RWPE1 (cell line): ENCODE measurements at regions of chr17 and their contacts with region 1.

Region 1: GRCh38 chr17:45172454-45173286 is 11.0 kb downstream of the HEXIM2 start:
- DNase-seq: peak; percentile 89
- H3K27ac ChIP-seq: peak overlapping the region; percentile 100
- CTCF ChIP-seq: no peak

Region 2: DNA sequence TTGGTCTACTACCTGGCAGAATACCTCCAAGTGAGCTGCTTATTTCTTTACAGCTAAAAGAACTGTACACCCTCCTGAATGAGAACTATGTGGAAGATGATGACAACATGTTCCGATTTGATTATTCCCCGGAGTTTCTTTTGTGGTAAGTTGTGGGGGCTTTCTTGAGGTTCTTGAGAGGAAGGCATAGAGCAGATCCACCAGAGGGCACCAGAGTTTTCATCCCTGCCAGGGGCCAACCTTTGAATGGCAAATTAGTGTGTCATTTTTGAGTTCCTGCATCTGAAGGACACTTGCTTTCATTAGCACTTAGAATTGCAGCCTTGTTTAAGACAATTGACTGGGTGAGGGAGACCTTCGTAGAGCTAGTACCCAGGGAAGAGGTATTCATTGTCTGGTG is 76.5 kb before region 1 on chr17:
- CTCF ChIA-PET with region 1: no interaction called
- POLR2A ChIA-PET with region 1: no interaction called
- DNase-seq: no peak
- H3K27ac ChIP-seq: no peak overlapping the region
- CTCF ChIP-seq: peak; percentile 54

Region 3: GRCh38 chr17:45161019-45161825 is 11.4 kb before region 1 on chr17:
- CTCF ChIA-PET with region 1: interaction called, 8 read pairs
- POLR2A ChIA-PET with region 1: interaction called, 40 read pairs
- DNase-seq: peak; percentile 97
- H3K27ac ChIP-seq: peak overlapping the region; percentile 95
- CTCF ChIP-seq: no peak

Region 4: GRCh38 chr17:45197555-45198334 is 25.1 kb after region 1 on chr17:
- CTCF ChIA-PET with region 1: interaction called, 27 read pairs
- POLR2A ChIA-PET with region 1: interaction called, 4 read pairs
- DNase-seq: peak; percentile 86
- H3K27ac ChIP-seq: peak overlapping the region; percentile 69
- CTCF ChIP-seq: peak; percentile 99

Region 5: DNA sequence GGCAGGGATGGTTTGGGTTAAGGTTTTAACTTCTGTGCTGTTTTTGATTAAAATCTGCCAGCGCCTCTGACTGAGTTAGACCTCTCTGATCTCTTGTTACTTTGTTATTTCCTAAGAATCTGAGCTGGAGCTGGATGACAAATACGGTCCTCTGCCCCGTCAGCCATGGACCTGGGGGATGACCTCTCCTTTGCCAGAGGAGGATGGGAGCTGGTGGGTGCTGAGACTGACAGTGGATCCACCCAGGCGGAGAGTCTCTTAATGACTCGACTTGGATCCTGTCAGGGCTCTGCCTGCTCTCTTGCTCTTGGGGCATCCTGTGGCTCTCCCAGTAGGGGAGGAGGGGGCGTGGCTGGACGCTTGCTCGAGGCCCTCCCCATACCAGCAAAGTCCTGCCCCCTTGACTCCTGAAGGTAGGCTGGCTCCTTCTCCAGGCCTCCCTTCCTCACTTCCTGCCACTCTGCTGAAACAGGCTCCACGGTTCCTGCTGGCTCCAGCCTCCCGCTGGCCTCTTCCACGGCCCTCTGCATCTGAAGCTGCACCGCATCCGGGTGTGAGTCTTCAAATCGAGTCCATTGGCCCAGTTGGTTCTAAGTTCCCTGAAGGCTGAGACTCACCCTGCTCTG is 169.0 kb after region 1 on chr17:
- CTCF ChIA-PET with region 1: no interaction called
- POLR2A ChIA-PET with region 1: no interaction called
- DNase-seq: peak; percentile 43
- H3K27ac ChIP-seq: peak overlapping the region; percentile 42
- CTCF ChIP-seq: no peak